ENCODE measurements at regions of chr15 and their contacts with region 1.

Region 1: DNA sequence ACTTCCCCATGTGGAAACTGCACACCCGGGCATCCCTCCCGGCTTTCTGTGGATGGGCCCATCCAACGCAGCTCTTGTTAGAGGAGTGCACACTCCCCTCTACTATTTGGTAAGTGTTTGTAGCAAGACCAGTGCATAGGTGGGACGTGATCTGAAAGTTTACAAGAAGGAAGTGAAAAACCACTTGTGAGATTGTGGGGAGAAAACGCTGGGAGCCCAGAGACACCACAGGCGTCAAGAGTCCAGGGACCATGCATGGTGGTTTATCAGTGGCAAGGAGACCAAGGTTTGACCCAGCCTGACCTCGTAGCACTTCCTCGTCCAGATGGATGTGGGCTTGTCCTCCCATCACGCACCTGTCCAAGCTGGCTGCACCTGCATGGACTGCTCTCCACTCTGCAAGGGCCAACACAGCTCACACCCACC is 51.6 kb downstream of the ATP10A start:
- DNase-seq: peak in 4 of 5 donors; percentile 8 to 44 (median 15)
- H3K4me3 ChIP-seq: peak overlapping the region in 1 of 2 donors; percentile 18
- H3K4me3 Mint-ChIP-seq: peak overlapping the region; percentile 63 to 86 (median 71)
- H3K27ac ChIP-seq: no peak overlapping the region
- H3K27ac Mint-ChIP-seq: peak overlapping the region; percentile 60 to 93 (median 83)
- H3K4me1 ChIP-seq: peaks cover 49% of the 10 kb centered on the region
- H3K4me1 Mint-ChIP-seq: peaks cover 42 to 73% (median 60%) of the 10 kb centered on the region in 4 donors
- H3K27me3 ChIP-seq: no peaks in the 10 kb centered on the region
- H3K27me3 Mint-ChIP-seq: no peaks in the 10 kb centered on the region

Region 2: GRCh38 chr15:25775317-25775912 is 36.1 kb before region 1 on chr15:
- CTCF ChIA-PET with region 1: no interaction called
- POLR2A ChIA-PET with region 1: no interaction called
- intact Hi-C with region 1: loop called (anchors 5 kb)
- DNase-seq: no peak
- H3K4me3 ChIP-seq: no peak overlapping the region
- H3K4me3 Mint-ChIP-seq: no peak overlapping the region
- H3K27ac ChIP-seq: no peak overlapping the region
- H3K27ac Mint-ChIP-seq: peak overlapping the region in 1 of 7 donors; percentile 28
- H3K4me1 ChIP-seq: no peaks in the 10 kb centered on the region
- H3K4me1 Mint-ChIP-seq: peaks cover 6 to 29% (median 16%) of the 10 kb centered on the region in 4 donors
- H3K27me3 ChIP-seq: no peaks in the 10 kb centered on the region
- H3K27me3 Mint-ChIP-seq: no peaks in the 10 kb centered on the region

Region 3: DNA sequence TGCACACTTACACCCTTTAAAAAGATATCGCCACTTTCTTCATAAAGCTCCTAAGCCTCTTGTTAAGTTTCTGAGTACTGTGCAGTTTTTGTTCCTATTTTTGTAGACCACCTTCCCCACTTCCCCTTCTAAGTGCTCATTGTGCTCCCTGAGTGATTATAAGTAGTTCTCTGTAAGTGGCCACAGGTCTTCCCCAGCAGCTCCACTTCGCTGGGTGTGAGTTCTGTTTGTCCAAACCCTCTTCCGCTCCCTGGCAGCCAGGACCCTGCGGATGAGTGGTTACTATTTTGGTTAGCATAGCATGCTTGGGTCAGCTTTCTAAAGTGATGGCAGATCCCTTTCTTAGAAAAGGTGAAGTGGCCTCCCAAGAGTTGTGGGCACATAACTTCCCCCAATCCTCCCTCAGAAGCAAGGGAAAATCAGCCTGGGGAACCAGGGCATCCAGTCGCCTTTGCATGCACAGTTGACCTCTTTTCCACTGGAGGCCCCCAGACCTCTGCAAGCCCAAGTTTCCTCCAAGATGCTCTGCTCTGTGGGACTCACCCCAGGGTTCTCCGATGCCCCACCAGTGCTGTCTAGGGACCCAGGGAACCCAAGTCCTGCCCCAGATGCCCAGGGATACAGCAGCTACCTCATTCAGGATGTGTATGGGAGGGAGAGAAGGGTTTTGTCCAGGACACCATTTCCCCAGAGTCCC is 18.0 kb before region 1 on chr15:
- CTCF ChIA-PET with region 1: no interaction called
- POLR2A ChIA-PET with region 1: no interaction called
- intact Hi-C with region 1: no loop called
- DNase-seq: no peak
- H3K4me3 ChIP-seq: no peak overlapping the region
- H3K4me3 Mint-ChIP-seq: no peak overlapping the region
- H3K27ac ChIP-seq: no peak overlapping the region
- H3K27ac Mint-ChIP-seq: peak overlapping the region in 1 of 7 donors; percentile 44
- H3K4me1 ChIP-seq: no peaks in the 10 kb centered on the region
- H3K4me1 Mint-ChIP-seq: peaks cover 24 to 68% (median 49%) of the 10 kb centered on the region in 4 donors
- H3K27me3 ChIP-seq: no peaks in the 10 kb centered on the region
- H3K27me3 Mint-ChIP-seq: no peaks in the 10 kb centered on the region

Region 4: DNA sequence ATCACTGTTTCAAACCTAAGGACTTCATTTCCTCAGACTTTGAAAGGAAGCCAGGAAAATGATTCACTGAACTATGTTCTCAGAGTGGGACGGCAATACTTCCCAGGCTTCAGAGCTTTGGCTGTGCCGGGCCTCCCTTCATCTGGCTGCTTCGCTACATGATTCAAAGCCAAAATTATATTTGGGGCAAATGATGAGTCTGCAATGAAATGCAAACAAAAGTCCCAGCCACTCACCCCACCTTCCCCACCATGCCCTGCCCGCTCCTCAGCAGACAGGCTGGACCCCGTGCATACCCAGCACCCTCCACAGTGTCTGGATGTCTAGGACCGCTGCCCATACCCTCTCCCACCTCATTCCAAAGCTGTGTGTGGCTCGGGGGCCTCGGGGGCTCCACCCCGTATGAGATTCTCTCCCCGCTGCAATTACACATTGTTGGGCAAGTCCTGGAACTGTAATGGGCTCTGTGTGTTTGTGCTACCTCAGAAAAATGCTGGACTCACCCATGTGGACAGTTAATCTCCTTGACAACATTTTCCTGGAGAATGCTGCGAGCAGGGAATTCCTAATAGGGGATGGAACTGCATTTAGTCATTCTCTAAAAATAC is 19.5 kb after region 1 on chr15:
- CTCF ChIA-PET with region 1: no interaction called
- POLR2A ChIA-PET with region 1: no interaction called
- intact Hi-C with region 1: loop called (anchors 2 kb)
- DNase-seq: no peak
- H3K4me3 ChIP-seq: no peak overlapping the region
- H3K4me3 Mint-ChIP-seq: no peak overlapping the region
- H3K27ac ChIP-seq: no peak overlapping the region
- H3K27ac Mint-ChIP-seq: peak overlapping the region in 1 of 7 donors; percentile 36
- H3K4me1 ChIP-seq: no peaks in the 10 kb centered on the region
- H3K4me1 Mint-ChIP-seq: peaks cover 8 to 44% (median 24%) of the 10 kb centered on the region in 4 donors
- H3K27me3 ChIP-seq: no peaks in the 10 kb centered on the region
- H3K27me3 Mint-ChIP-seq: no peaks in the 10 kb centered on the region

Region 5: GRCh38 chr15:25850154-25851111 is 38.9 kb after region 1 on chr15:
- CTCF ChIA-PET with region 1: interaction called, 4 read pairs
- POLR2A ChIA-PET with region 1: interaction called, 6 read pairs
- intact Hi-C with region 1: loop called (anchors 2 kb)
- DNase-seq: peak; percentile 60 to 82 (median 69)
- H3K4me3 ChIP-seq: peak overlapping the region; percentile 58 to 69
- H3K4me3 Mint-ChIP-seq: peak overlapping the region; percentile 91 to 98 (median 96)
- H3K27ac ChIP-seq: peak overlapping the region; percentile 82
- H3K27ac Mint-ChIP-seq: peak overlapping the region; percentile 96 to 99 (median 98)
- H3K4me1 ChIP-seq: peaks cover 84% of the 10 kb centered on the region
- H3K4me1 Mint-ChIP-seq: peaks cover 68 to 94% (median 81%) of the 10 kb centered on the region in 4 donors
- H3K27me3 ChIP-seq: no peaks in the 10 kb centered on the region
- H3K27me3 Mint-ChIP-seq: no peaks in the 10 kb centered on the region

Region 6: GRCh38 chr15:26421065-26421464 is 609.6 kb after region 1 on chr15:
- CTCF ChIA-PET with region 1: no interaction called
- POLR2A ChIA-PET with region 1: no interaction called
- intact Hi-C with region 1: no loop called
- DNase-seq: no peak
- H3K4me3 ChIP-seq: no peak overlapping the region
- H3K4me3 Mint-ChIP-seq: no peak overlapping the region
- H3K27ac ChIP-seq: no peak overlapping the region
- H3K27ac Mint-ChIP-seq: no peak overlapping the region
- H3K4me1 ChIP-seq: no peaks in the 10 kb centered on the region
- H3K4me1 Mint-ChIP-seq: no peaks in the 10 kb centered on the region
- H3K27me3 ChIP-seq: no peaks in the 10 kb centered on the region
- H3K27me3 Mint-ChIP-seq: no peaks in the 10 kb centered on the region

Measured in CD4-positive, alpha-beta memory T cell (primary cell).